ENCODE measurements at regions of chr1 and their contacts with region 1.

Region 1: GRCh38 chr1:204162231-204163074 is 3.7 kb downstream of the REN start:
- DNase-seq: peak; percentile 86
- ATAC-seq: peak; percentile 98
- H3K4me3 Mint-ChIP-seq: no peak overlapping the region
- H3K27ac Mint-ChIP-seq: no peak overlapping the region
- H3K4me1 Mint-ChIP-seq: peaks cover 2% of the 10 kb centered on the region
- H3K27me3 Mint-ChIP-seq: peaks cover 7% of the 10 kb centered on the region
- CTCF ChIP-seq: peak; percentile 96

Region 2: DNA sequence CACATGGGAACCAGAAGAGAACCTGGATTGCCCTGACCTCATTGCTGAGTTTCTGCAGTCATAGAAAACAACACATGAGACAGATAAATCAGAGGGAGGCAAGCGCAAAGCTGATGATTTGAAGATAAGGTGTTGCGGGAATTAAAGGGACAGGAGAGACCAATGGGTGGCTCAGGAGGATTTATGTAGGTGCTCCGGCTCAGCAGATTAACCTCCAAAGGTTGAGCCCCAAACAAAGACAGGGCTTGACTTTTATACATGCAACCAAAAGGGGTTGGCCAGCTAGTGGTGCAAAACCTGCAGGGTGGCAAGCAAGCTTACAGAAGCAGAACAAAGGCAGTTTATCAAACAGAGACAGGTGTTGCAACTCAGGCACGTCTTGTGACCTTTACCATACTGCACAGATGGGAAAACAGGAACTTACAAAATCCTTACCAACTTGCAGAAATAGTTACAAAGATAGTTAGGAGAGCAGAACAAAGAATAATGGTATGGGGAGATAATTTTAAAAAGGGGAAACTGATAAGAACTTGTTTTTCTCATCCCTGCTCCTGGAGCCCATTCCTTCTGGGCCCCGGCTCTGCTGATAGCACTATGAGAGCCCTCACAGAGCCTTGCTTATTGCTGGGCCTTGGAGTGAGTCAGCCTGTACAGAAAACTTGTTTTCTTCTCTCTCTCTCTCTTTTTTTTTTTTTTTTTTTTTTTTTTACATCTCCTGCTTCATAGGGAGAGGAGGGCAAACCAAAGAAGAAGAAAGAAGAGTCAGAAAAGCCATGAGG is 207.5 kb before region 1 on chr1:
- CTCF ChIA-PET with region 1: no interaction called
- POLR2A ChIA-PET with region 1: no interaction called
- intact Hi-C with region 1: no loop called
- DNase-seq: no peak
- ATAC-seq: no peak
- H3K4me3 Mint-ChIP-seq: no peak overlapping the region
- H3K27ac Mint-ChIP-seq: no peak overlapping the region
- H3K4me1 Mint-ChIP-seq: no peaks in the 10 kb centered on the region
- H3K27me3 Mint-ChIP-seq: peaks cover 19% of the 10 kb centered on the region
- CTCF ChIP-seq: no peak

Region 3: GRCh38 chr1:204182882-204183281 is 20.4 kb after region 1 on chr1:
- CTCF ChIA-PET with region 1: interaction called, 36 read pairs
- POLR2A ChIA-PET with region 1: no interaction called
- intact Hi-C with region 1: no loop called
- DNase-seq: no peak
- ATAC-seq: no peak
- H3K4me3 Mint-ChIP-seq: no peak overlapping the region
- H3K27ac Mint-ChIP-seq: no peak overlapping the region
- H3K4me1 Mint-ChIP-seq: no peaks in the 10 kb centered on the region
- H3K27me3 Mint-ChIP-seq: peaks cover 10% of the 10 kb centered on the region
- CTCF ChIP-seq: no peak

Region 4: GRCh38 chr1:204190212-204191211 is 28.1 kb after region 1 on chr1:
- CTCF ChIA-PET with region 1: interaction called, 16 read pairs
- POLR2A ChIA-PET with region 1: no interaction called
- intact Hi-C with region 1: no loop called
- DNase-seq: peak; percentile 63
- ATAC-seq: peak; percentile 72
- H3K4me3 Mint-ChIP-seq: no peak overlapping the region
- H3K27ac Mint-ChIP-seq: no peak overlapping the region
- H3K4me1 Mint-ChIP-seq: peaks cover 29% of the 10 kb centered on the region
- H3K27me3 Mint-ChIP-seq: peaks cover 31% of the 10 kb centered on the region
- CTCF ChIP-seq: no peak

Region 5: DNA sequence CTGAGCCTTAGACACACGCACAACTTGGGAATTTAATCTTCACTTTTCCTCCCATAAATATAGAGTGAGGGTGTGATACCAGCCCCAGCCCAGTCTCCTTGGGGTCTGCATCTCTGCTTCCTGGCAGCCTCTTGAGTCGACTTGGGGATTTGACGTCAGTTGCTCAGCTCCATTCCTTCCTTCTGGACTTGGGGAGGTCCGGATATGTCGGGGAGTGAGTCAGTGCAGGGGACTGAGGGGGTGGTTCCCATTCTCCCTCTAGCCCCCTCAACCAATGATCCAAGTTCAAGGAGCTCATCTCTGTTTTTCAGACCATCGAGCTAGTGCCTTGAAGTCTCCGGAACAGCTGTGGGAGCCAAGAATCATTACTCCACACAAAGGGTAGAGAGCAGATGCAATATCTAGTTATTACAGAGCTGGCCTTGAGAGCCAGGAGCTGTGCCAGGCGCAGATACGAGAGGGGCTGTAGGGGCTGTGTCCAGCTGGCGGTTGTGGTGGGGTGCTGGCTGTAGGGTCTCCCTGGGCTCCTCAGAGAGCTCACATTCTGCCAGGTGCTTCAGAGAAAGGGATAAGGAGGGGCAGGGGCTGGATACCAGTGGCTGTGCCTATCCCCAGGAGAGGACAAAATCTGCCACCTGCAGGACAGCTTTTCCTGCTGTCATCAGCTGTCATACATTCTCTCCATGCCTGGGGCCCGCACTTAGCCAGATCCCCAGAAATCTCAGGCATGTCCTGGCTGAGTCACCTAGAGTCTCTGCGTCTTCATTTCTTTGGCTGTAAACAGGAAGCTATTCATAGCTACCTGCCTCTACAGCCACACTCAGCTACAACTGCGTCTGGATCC is 35.9 kb after region 1 on chr1:
- CTCF ChIA-PET with region 1: interaction called, 12 read pairs
- POLR2A ChIA-PET with region 1: no interaction called
- intact Hi-C with region 1: no loop called
- DNase-seq: peak; percentile 10
- ATAC-seq: peak; percentile 66
- H3K4me3 Mint-ChIP-seq: no peak overlapping the region
- H3K27ac Mint-ChIP-seq: no peak overlapping the region
- H3K4me1 Mint-ChIP-seq: peaks cover 15% of the 10 kb centered on the region
- H3K27me3 Mint-ChIP-seq: no peaks in the 10 kb centered on the region
- CTCF ChIP-seq: no peak

Region 6: DNA sequence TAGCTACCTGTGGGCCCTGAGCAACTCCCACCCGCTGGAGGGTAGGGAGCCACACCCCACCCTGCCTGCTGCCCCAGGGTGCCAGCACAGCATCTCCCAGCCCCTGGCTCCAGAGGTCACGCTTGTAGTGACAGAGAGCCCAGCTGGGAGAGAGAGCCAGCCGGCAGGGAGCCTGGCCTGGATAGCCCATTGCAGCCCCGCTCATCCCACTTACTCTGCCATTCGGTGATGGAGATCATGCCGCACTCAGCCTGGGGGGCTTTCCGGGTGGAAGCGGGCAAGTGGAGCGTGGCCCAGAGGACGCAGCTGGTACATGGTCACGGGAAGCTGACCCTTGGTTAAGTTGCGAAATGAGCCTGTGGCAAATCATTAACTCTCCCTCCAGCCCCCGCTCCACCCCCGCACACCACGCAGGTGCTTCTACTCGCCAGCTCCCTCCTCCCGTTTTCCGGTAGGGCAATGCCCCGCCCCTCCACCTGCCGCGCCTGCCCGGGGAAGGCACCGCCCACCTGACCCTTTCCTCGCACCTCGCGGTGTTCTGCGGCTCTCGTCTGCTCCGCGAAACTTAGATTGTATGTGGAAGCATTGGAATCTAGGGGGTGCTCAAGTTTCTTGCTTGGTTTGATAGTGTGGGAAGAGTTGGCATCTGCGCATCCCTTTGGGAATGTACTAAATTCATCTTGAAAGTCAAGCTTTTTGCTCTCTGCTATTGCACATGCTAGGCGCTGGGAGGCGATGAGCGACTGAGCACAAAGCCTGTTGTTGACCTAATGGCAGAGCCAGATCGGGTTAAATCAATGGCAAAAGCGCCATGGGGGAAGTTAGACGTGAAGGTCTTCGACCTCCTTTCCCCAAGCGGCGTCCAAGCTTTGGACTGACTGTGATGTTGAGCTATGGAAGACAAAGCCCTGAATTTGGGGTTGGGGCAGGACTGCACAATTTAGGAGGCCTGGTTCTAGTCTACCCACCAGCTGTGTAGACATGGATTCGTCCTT is 51.5 kb after region 1 on chr1 and contains the start of gene GOLT1A:
- CTCF ChIA-PET with region 1: interaction called, 21 read pairs
- POLR2A ChIA-PET with region 1: no interaction called
- intact Hi-C with region 1: no loop called
- DNase-seq: peak; percentile 67
- ATAC-seq: peak; percentile 86
- H3K4me3 Mint-ChIP-seq: peak within 1 kb of the TSS; percentile 28
- H3K27ac Mint-ChIP-seq: no peak within 1 kb of the TSS
- H3K4me1 Mint-ChIP-seq: peaks cover 13% of the 10 kb centered on the region
- H3K27me3 Mint-ChIP-seq: peaks cover 3% of the 10 kb centered on the region
- CTCF ChIP-seq: peak; percentile 62
- total RNA-seq, gene GOLT1A: not detected

Region 7: GRCh38 chr1:204323887-204324286 is 161.4 kb after region 1 on chr1:
- CTCF ChIA-PET with region 1: interaction called, 10 read pairs
- POLR2A ChIA-PET with region 1: no interaction called
- intact Hi-C with region 1: no loop called
- DNase-seq: peak; percentile 86
- ATAC-seq: peak; percentile 99
- H3K4me3 Mint-ChIP-seq: no peak overlapping the region
- H3K27ac Mint-ChIP-seq: peak overlapping the region; percentile 70
- H3K4me1 Mint-ChIP-seq: peaks cover 24% of the 10 kb centered on the region
- H3K27me3 Mint-ChIP-seq: peaks cover 2% of the 10 kb centered on the region
- CTCF ChIP-seq: no peak

Region 8: GRCh38 chr1:204368996-204369726 is 206.7 kb after region 1 on chr1:
- CTCF ChIA-PET with region 1: interaction called, 92 read pairs
- POLR2A ChIA-PET with region 1: no interaction called
- intact Hi-C with region 1: no loop called
- DNase-seq: no peak
- ATAC-seq: no peak
- H3K4me3 Mint-ChIP-seq: no peak overlapping the region
- H3K27ac Mint-ChIP-seq: no peak overlapping the region
- H3K4me1 Mint-ChIP-seq: peaks cover 25% of the 10 kb centered on the region
- H3K27me3 Mint-ChIP-seq: peaks cover 1% of the 10 kb centered on the region
- CTCF ChIP-seq: no peak